Breast epithelium (tissue), 4 donors: ENCODE measurements at regions of chr1 and their contacts with region 1.

Region 1: DNA sequence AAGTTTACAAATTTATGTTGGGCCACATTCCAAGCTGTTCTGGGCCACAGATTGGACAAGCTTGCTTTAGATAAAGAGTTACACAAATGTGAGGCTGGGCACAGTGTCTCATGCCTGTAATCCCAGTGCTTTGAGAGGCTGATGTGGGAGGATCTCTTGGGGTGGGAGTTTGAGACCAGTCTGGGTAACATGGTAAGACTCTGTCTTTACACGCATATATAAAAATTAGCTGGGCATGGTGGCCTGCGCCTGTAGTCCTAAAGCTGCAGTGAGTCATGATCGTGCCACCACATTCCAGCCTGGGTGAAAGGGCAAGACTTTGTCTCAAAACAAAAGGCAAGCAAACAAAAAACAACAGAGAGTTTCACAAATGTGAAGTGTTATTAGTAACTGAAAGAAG is 5.9 kb upstream of the VCAM1 start:
- DNase-seq: no peak
- H3K4me3 ChIP-seq: no peak overlapping the region
- H3K27ac ChIP-seq: no peak overlapping the region
- H3K4me1 ChIP-seq: no peaks in the 10 kb centered on the region
- H3K27me3 ChIP-seq: no peaks in the 10 kb centered on the region
- CTCF ChIP-seq: no peak
- POLR2A ChIP-seq: no peak

Region 2: GRCh38 chr1:100322436-100323211 is 391.0 kb before region 1 on chr1:
- intact Hi-C with region 1: no loop called
- DNase-seq: no peak
- H3K4me3 ChIP-seq: no peak overlapping the region
- H3K27ac ChIP-seq: no peak overlapping the region
- H3K4me1 ChIP-seq: no peaks in the 10 kb centered on the region
- H3K27me3 ChIP-seq: no peaks in the 10 kb centered on the region
- CTCF ChIP-seq: no peak
- POLR2A ChIP-seq: no peak

Region 3: DNA sequence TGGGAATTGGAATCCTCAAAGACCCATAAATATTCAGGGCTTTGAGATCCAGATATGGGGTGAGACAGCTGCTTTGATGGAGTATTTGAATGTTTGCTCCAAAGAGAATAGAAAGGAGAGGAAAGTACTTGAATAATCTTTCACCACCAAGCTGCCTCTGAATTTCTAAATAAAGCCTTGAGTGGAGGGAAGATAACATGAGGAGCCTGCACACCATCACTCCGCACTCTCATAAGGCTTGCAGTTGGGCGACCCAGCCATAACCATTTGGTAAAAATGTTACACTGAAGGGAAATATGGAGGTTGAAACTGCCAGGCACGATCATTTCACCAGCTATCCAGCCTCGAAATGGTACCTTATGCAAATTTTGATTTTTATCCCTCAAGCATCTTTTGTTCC is 44.3 kb after region 1 on chr1:
- intact Hi-C with region 1: loop called (anchors 2 kb)
- DNase-seq: no peak
- H3K4me3 ChIP-seq: no peak overlapping the region
- H3K27ac ChIP-seq: no peak overlapping the region
- H3K4me1 ChIP-seq: no peaks in the 10 kb centered on the region
- H3K27me3 ChIP-seq: no peaks in the 10 kb centered on the region
- CTCF ChIP-seq: no peak
- POLR2A ChIP-seq: no peak